GM18951 (cell line): ENCODE measurements at regions of chr1 and their contacts with region 1.

Region 1: GRCh38 chr1:2194898-2195673 is 514 bp upstream of the FAAP20 start:
- POLR2A ChIP-seq: peak; percentile 48

Region 2: GRCh38 chr1:2556277-2556677 is 361.2 kb after region 1 on chr1 and contains the start of gene TNFRSF14:
- in situ Hi-C with region 1: loop called (anchors 25 kb)
- POLR2A ChIP-seq: peak; percentile 65